Activated naive CD4-positive, alpha-beta T cell treated with anti-CD3 and anti-CD28 coated beads for 36 hours (primary cell): ENCODE measurements at regions of chr4 and their contacts with region 1.

Region 1: GRCh38 chr4:1693129-1693896 is 9.2 kb upstream of the FAM53A start:
- DNase-seq: peak; percentile 80
- H3K4me3 Mint-ChIP-seq: no peak overlapping the region
- H3K27ac Mint-ChIP-seq: peak overlapping the region; percentile 25
- H3K4me1 Mint-ChIP-seq: peaks cover 3% of the 10 kb centered on the region
- H3K27me3 Mint-ChIP-seq: no peaks in the 10 kb centered on the region

Region 2: DNA sequence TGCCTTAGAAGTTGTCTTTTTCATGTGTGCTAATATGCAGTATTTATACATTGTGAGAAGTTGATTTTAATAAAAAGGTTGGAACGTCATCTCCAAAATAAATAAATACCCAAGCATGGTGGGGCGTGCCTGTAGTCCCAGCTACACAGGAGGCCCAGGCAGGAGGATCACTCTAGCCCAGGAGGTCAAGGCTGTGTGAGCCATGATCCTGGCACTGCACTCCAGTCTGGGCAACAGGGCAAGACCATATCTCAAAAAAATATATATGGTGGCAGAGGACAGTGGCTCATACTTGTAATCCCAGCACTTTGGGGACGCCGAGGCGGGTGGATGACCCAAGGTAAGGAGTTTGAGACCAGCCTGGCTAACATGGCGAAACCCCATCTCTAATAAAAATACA is 12.4 kb after region 1 on chr4:
- CTCF ChIA-PET with region 1: interaction called, 77 read pairs
- intact Hi-C with region 1: no loop called
- DNase-seq: no peak
- H3K4me3 Mint-ChIP-seq: no peak overlapping the region
- H3K27ac Mint-ChIP-seq: no peak overlapping the region
- H3K4me1 Mint-ChIP-seq: peaks cover 69% of the 10 kb centered on the region
- H3K27me3 Mint-ChIP-seq: no peaks in the 10 kb centered on the region

Region 3: GRCh38 chr4:1721004-1721665 is 27.8 kb after region 1 on chr4 and contains the starts of genes TACC3 and TMEM129:
- CTCF ChIA-PET with region 1: interaction called, 58 read pairs
- intact Hi-C with region 1: loop called (anchors 1 kb)
- DNase-seq: peak; percentile 96
- H3K4me3 Mint-ChIP-seq: peak within 1 kb of the TSS; percentile 94
- H3K27ac Mint-ChIP-seq: peak within 1 kb of the TSS; percentile 98
- H3K4me1 Mint-ChIP-seq: peaks cover 53% of the 10 kb centered on the region
- H3K27me3 Mint-ChIP-seq: no peaks in the 10 kb centered on the region
- total RNA-seq, gene TACC3: 246 to 264 TPM
- total RNA-seq, gene TMEM129: 19.0 to 19.8 TPM

Region 4: GRCh38 chr4:1726146-1726934 is 33.0 kb after region 1 on chr4:
- CTCF ChIA-PET with region 1: interaction called, 58 read pairs
- intact Hi-C with region 1: loop called (anchors 1 kb)
- DNase-seq: peak; percentile 93
- H3K4me3 Mint-ChIP-seq: no peak overlapping the region
- H3K27ac Mint-ChIP-seq: peak overlapping the region; percentile 70
- H3K4me1 Mint-ChIP-seq: peaks cover 68% of the 10 kb centered on the region
- H3K27me3 Mint-ChIP-seq: no peaks in the 10 kb centered on the region

Region 5: GRCh38 chr4:1809754-1810511 is 116.6 kb after region 1 on chr4:
- CTCF ChIA-PET with region 1: no interaction called
- intact Hi-C with region 1: loop called (anchors 1 kb)
- DNase-seq: peak; percentile 84
- H3K4me3 Mint-ChIP-seq: no peak overlapping the region
- H3K27ac Mint-ChIP-seq: no peak overlapping the region
- H3K4me1 Mint-ChIP-seq: no peaks in the 10 kb centered on the region
- H3K27me3 Mint-ChIP-seq: no peaks in the 10 kb centered on the region

Region 6: GRCh38 chr4:1856042-1856788 is 162.9 kb after region 1 on chr4 and contains the start of gene LETM1:
- CTCF ChIA-PET with region 1: no interaction called
- intact Hi-C with region 1: no loop called
- DNase-seq: peak; percentile 95
- H3K4me3 Mint-ChIP-seq: peak within 1 kb of the TSS; percentile 79
- H3K27ac Mint-ChIP-seq: no peak within 1 kb of the TSS
- H3K4me1 Mint-ChIP-seq: peaks cover 38% of the 10 kb centered on the region
- H3K27me3 Mint-ChIP-seq: no peaks in the 10 kb centered on the region
- total RNA-seq, gene LETM1: 36.3 to 40.5 TPM

Region 7: DNA sequence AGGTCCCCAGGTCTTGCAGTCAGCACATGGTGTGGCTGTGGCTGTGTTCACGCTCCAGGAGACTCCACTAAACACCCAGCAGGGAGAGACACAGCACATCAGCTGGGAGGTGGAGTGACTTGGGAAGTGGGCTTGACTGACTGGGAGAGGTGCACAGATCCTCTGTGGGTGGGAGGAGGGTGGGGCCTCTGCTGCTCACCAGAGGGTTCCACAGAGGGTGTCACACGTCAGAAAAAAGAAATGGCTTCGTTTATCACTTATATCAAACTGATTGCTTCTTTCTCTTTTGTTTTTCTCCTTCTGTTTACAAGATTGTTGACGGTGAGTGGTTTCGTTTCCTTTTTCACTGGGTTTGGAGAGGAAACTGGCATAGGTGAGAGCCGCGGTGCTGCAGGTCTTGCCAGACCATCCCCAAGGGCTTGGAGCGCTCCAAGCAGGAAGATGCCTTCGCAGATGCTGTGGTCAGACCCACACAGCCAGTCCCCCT is 818.4 kb after region 1 on chr4:
- CTCF ChIA-PET with region 1: no interaction called
- intact Hi-C with region 1: no loop called
- DNase-seq: no peak
- H3K4me3 Mint-ChIP-seq: no peak overlapping the region
- H3K27ac Mint-ChIP-seq: no peak overlapping the region
- H3K4me1 Mint-ChIP-seq: no peaks in the 10 kb centered on the region
- H3K27me3 Mint-ChIP-seq: no peaks in the 10 kb centered on the region